Naive thymus-derived CD4-positive, alpha-beta T cell (primary cell): ENCODE measurements at regions of chr15 and their contacts with region 1.

Region 1: DNA sequence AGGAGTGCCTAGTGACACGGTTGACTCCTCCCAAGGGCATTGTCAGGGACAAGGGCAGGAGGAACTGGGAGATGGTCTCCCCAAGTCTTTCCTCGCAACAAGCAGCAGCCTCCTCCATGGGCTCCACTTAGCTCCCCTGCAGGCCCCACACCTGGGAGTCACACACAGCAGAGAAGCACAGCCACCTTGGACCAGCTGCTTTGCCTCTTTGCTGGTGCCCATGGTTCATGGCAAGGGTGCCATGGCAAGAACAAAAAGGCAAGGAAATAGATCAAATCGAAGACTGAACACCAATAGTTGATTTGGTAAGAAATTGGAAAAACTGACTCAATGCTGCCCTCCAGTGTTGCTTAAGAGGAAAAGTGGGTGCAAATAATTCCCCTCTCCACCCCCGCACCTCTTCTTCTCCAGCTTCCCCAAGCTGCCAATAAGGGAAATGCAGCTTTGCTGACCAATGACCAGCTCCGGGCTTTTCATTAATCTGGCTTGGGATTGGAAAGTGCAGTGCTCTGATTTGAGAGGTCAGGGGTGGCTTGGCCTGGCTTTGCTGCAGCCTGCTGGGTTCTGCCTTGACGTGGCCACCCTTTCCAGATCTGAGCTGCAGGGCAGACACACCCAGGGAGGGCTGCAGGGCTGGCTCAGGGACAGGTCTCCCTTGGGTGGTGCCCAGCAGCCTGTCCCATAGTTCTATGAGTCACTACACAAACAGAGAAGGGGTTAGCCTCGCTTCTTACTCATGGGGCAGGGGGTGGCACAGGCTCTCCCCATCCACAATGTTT is 162.0 kb downstream of the KLF13 start:
- DNase-seq: peak; percentile 25 to 70 (median 64)
- ATAC-seq: peak; percentile 78
- H3K4me3 ChIP-seq: no peak overlapping the region
- H3K4me3 Mint-ChIP-seq: peak overlapping the region in 2 of 10 donors; percentile 47 to 65
- H3K27ac ChIP-seq: no peak overlapping the region
- H3K27ac Mint-ChIP-seq: peak overlapping the region in 6 of 9 donors; percentile 14 to 87 (median 68)
- H3K4me1 ChIP-seq: peaks cover 23 to 26% of the 10 kb centered on the region in 2 donors
- H3K4me1 Mint-ChIP-seq: peaks cover 14 to 71% (median 28%) of the 10 kb centered on the region in 7 donors
- H3K27me3 ChIP-seq: no peaks in the 10 kb centered on the region
- H3K27me3 Mint-ChIP-seq: no peaks in the 10 kb centered on the region

Region 2: DNA sequence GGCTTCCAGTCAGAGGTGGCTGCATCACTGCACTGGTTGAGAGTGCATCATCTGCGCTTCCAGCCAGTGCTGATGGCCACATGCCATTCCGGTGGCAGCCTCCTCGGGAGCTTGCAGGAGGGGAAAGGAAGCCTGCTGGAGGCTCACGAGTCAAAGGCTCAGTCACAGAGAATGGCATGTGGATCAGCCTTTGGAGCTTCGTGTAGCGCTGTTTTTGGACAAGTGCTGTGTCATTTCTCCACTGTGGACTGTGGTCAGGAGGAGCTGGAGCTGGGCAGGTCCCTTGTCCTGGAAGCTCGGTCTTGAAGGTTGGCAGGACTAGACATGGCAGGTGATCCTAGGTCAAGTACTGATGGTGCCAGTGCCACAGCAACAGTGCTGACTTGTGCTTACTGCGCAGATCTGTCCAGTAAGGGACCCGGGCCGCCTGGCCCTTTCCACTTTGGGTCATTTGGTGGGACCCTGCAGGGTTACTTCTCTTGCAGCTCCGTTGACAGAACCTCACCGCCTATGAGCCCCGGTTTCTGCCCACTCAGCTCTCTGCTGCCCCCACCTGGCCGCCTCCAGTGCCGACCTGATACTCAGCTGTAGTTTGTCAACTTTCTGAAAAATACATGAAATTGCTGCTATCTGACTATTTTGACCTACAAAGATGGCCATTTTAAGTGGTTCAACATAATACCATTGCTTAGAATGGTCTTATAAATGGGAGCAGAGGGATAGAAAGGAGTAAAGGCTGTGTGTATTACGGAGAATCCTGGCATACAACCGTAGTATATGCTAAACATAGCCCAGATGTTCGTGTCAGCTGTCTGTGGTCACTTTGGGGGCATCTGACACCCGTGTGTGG is 359.5 kb before region 1 on chr15:
- CTCF ChIA-PET with region 1: interaction called, 3 read pairs
- POLR2A ChIA-PET with region 1: no interaction called
- intact Hi-C with region 1: loop called in 1 of 2 experiments (anchors 1 kb)
- DNase-seq: peak; percentile 47 to 81 (median 72)
- ATAC-seq: peak; percentile 91
- H3K4me3 ChIP-seq: no peak overlapping the region
- H3K4me3 Mint-ChIP-seq: no peak overlapping the region
- H3K27ac ChIP-seq: no peak overlapping the region
- H3K27ac Mint-ChIP-seq: no peak overlapping the region
- H3K4me1 ChIP-seq: no peaks in the 10 kb centered on the region
- H3K4me1 Mint-ChIP-seq: peaks cover 0 to 4% (median 0%) of the 10 kb centered on the region in 7 donors
- H3K27me3 ChIP-seq: no peaks in the 10 kb centered on the region
- H3K27me3 Mint-ChIP-seq: peaks cover 0 to 6% (median 0%) of the 10 kb centered on the region in 5 donors

Region 3: GRCh38 chr15:31215490-31216214 is 273.0 kb before region 1 on chr15:
- CTCF ChIA-PET with region 1: interaction called, 10 read pairs
- POLR2A ChIA-PET with region 1: interaction called, 9 read pairs
- intact Hi-C with region 1: loop called (anchors 1 to 5 kb)
- DNase-seq: peak; percentile 53 to 84 (median 69)
- ATAC-seq: peak; percentile 84
- H3K4me3 ChIP-seq: peak overlapping the region; percentile 30
- H3K4me3 Mint-ChIP-seq: peak overlapping the region; percentile 50 to 90 (median 74)
- H3K27ac ChIP-seq: peak overlapping the region; percentile 76
- H3K27ac Mint-ChIP-seq: peak overlapping the region; percentile 84 to 91 (median 87)
- H3K4me1 ChIP-seq: peaks cover 11 to 14% of the 10 kb centered on the region in 2 donors
- H3K4me1 Mint-ChIP-seq: peaks cover 5 to 54% (median 41%) of the 10 kb centered on the region in 7 donors
- H3K27me3 ChIP-seq: no peaks in the 10 kb centered on the region
- H3K27me3 Mint-ChIP-seq: no peaks in the 10 kb centered on the region

Region 4: GRCh38 chr15:31302778-31303725 is 185.6 kb before region 1 on chr15:
- CTCF ChIA-PET with region 1: interaction called, 8 read pairs
- POLR2A ChIA-PET with region 1: no interaction called
- intact Hi-C with region 1: loop called in 1 of 2 experiments (anchors 1 kb)
- DNase-seq: peak in 2 of 9 donors; percentile 30 to 44
- ATAC-seq: peak; percentile 63
- H3K4me3 ChIP-seq: no peak overlapping the region
- H3K4me3 Mint-ChIP-seq: peak overlapping the region in 3 of 10 donors; percentile 5 to 51 (median 15)
- H3K27ac ChIP-seq: no peak overlapping the region
- H3K27ac Mint-ChIP-seq: peak overlapping the region in 7 of 9 donors; percentile 22 to 75 (median 61)
- H3K4me1 ChIP-seq: peaks cover 0 to 31% of the 10 kb centered on the region in 2 donors
- H3K4me1 Mint-ChIP-seq: peaks cover 17 to 52% (median 35%) of the 10 kb centered on the region in 7 donors
- H3K27me3 ChIP-seq: no peaks in the 10 kb centered on the region
- H3K27me3 Mint-ChIP-seq: peaks cover 0 to 6% (median 0%) of the 10 kb centered on the region in 5 donors

Region 5: DNA sequence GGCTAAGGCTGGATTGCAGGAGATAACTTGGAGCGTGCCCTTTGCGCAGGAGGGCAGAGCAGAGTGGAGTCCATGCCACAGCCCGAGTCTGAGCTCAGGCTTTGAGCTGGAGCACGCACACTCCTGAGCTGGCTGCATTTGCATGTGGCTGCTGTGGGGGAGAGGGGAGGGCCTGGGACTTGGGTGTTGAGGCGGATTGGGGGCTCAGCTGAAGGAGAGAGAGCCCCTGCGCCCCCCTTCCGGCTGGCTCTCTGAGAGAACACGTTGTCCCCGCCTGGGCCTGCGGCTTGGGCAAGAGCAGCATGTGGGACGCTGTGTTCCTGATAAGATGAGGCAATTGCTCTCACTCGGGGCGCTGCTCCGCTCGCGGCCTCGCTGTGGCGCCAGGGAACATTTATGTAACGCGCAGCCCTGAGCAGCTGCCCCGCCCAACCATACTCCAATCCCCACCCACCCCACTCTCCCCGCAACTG is 122.9 kb before region 1 on chr15:
- CTCF ChIA-PET with region 1: interaction called, 45 read pairs
- POLR2A ChIA-PET with region 1: interaction called, 38 read pairs
- intact Hi-C with region 1: loop called (anchors 1 kb)
- DNase-seq: peak; percentile 53 to 82 (median 78)
- ATAC-seq: peak; percentile 68
- H3K4me3 ChIP-seq: peak overlapping the region; percentile 36
- H3K4me3 Mint-ChIP-seq: peak overlapping the region; percentile 72 to 88 (median 85)
- H3K27ac ChIP-seq: peak overlapping the region; percentile 94
- H3K27ac Mint-ChIP-seq: peak overlapping the region; percentile 92 to 99 (median 97)
- H3K4me1 ChIP-seq: peaks cover 87% of the 10 kb centered on the region in 2 donors
- H3K4me1 Mint-ChIP-seq: peaks cover 85 to 100% (median 99%) of the 10 kb centered on the region in 7 donors
- H3K27me3 ChIP-seq: no peaks in the 10 kb centered on the region
- H3K27me3 Mint-ChIP-seq: no peaks in the 10 kb centered on the region

Region 6: DNA sequence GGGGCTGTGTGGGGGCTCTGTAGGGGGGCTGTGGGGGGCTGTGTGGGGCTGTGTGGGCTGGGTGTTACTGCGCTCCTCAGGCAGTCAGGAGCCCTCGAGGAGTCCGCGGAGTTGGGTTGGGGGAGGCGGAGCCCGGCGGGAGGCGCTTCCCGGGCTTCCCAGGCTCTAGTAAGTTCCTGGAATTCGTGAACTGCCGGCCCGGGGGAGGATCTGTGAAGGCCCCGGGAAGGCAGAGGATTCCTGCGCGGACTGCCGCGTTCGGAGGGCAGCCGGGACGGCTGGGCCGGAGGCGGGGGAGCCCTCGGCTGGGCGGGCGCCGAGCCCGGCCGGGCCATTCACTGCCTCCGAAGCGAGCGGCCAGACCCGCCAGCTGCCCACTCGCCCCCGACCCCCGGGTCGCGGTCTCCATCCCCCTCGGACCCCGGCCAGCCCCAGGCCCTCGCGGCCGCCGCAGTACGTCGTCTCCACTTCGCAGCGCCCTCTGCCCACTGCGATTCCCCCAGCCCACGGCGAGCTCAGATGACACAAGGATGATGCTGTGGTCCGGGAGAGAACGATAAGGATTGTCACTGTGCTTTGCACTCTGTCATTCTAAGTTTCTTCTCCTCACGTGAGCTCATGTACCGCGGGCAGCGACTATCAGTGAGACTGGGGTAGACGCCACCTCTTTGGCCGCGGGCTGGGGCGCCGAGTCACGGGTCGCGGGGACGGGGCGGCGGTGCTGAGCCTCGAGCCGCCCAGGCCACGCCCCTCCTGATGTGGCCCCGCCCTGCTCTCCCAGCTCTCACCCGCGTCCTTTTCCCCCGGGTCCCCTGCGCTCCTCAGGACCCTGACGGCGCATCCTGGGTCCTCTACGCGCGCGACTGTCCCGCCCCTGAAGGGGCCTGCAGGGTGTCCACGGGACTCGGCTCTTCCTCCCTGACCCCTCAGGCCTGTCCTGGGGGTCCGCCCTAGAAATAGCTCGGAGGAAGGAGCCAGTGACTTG is 96.6 kb before region 1 on chr15:
- CTCF ChIA-PET with region 1: interaction called, 4 read pairs
- POLR2A ChIA-PET with region 1: interaction called, 3 read pairs
- intact Hi-C with region 1: loop called (anchors 5 kb)
- DNase-seq: peak; percentile 61 to 87 (median 73)
- ATAC-seq: peak; percentile 91
- H3K4me3 ChIP-seq: peak overlapping the region; percentile 72
- H3K4me3 Mint-ChIP-seq: peak overlapping the region; percentile 81 to 95 (median 90)
- H3K27ac ChIP-seq: peak overlapping the region; percentile 68
- H3K27ac Mint-ChIP-seq: peak overlapping the region; percentile 79 to 95 (median 88)
- H3K4me1 ChIP-seq: peaks cover 13 to 30% of the 10 kb centered on the region in 2 donors
- H3K4me1 Mint-ChIP-seq: peaks cover 21 to 61% (median 46%) of the 10 kb centered on the region in 7 donors
- H3K27me3 ChIP-seq: no peaks in the 10 kb centered on the region
- H3K27me3 Mint-ChIP-seq: no peaks in the 10 kb centered on the region

Region 7: DNA sequence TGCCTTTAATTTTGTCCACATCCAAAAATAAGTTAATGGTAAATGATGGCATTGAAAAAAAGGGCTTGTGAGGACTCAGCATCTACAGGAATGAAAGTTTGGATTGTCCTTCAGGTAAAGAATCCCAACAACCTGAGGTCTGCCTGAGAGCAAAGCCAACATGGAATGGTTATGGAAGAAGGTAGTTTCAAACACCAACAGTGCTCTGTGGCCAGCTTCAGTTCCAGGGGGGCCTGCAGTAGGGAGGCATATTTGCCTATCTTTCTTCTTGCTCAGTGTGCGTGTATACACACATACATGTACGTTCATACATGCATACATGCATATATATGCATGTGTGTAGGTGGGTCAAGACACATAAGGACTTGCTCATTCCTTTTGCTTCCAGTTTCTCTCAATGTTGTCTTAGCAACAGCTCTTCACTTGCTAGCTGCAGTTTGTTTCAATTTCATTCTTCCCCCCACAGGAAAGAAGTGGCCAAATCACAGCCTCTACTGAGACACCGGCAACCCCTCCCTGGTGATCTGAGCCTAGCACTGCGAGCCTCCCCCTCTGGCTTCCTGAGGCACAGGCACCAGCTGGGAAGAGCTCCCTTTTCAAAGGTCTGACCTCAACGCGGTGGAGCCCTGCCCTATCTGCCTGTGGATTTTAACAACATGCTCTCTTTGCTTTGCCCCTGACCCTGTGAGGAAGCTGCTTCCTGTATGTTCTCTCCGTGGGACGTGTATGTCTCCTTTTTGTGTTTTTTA is 15.8 kb before region 1 on chr15:
- CTCF ChIA-PET with region 1: interaction called, 10 read pairs
- POLR2A ChIA-PET with region 1: interaction called, 62 read pairs
- intact Hi-C with region 1: loop called (anchors 1 kb)
- DNase-seq: peak in 8 of 9 donors; percentile 48 to 71 (median 66)
- ATAC-seq: peak; percentile 90
- H3K4me3 ChIP-seq: peak overlapping the region; percentile 28
- H3K4me3 Mint-ChIP-seq: peak overlapping the region; percentile 69 to 90 (median 79)
- H3K27ac ChIP-seq: peak overlapping the region; percentile 66
- H3K27ac Mint-ChIP-seq: peak overlapping the region; percentile 90 to 96 (median 93)
- H3K4me1 ChIP-seq: peaks cover 29 to 34% of the 10 kb centered on the region in 2 donors
- H3K4me1 Mint-ChIP-seq: peaks cover 22 to 62% (median 58%) of the 10 kb centered on the region in 7 donors
- H3K27me3 ChIP-seq: no peaks in the 10 kb centered on the region
- H3K27me3 Mint-ChIP-seq: no peaks in the 10 kb centered on the region

Region 8: DNA sequence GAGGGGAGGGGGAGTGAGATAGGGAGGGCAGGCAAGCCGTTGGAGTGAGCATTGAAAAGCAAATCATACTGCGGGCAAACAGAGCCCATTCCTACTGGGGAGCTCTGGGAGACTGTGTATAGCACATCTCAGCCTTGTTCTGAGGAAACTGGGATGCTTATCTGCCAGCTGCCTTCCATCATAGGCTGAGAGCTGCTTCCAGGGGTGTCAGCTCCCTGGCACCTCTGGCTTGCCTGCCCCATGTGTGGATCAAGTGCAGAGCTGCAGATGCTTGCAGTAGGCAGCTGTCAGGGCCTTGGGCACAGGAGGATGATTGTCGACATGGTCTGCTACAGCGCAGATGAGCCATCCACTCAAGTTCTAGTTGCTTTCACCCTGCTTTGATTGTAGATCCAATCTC is 628.5 kb after region 1 on chr15:
- CTCF ChIA-PET with region 1: no interaction called
- POLR2A ChIA-PET with region 1: no interaction called
- intact Hi-C with region 1: no loop called
- DNase-seq: no peak
- ATAC-seq: no peak
- H3K4me3 ChIP-seq: no peak overlapping the region
- H3K4me3 Mint-ChIP-seq: no peak overlapping the region
- H3K27ac ChIP-seq: no peak overlapping the region
- H3K27ac Mint-ChIP-seq: no peak overlapping the region
- H3K4me1 ChIP-seq: no peaks in the 10 kb centered on the region
- H3K4me1 Mint-ChIP-seq: no peaks in the 10 kb centered on the region
- H3K27me3 ChIP-seq: no peaks in the 10 kb centered on the region
- H3K27me3 Mint-ChIP-seq: peaks cover 0 to 22% (median 10%) of the 10 kb centered on the region in 5 donors